Activated CD8-positive, alpha-beta T cell treated with anti-CD3 and anti-CD28 coated beads for 36 hours (primary cell): ENCODE measurements at regions of chr7 and their contacts with region 1.

Region 1: DNA sequence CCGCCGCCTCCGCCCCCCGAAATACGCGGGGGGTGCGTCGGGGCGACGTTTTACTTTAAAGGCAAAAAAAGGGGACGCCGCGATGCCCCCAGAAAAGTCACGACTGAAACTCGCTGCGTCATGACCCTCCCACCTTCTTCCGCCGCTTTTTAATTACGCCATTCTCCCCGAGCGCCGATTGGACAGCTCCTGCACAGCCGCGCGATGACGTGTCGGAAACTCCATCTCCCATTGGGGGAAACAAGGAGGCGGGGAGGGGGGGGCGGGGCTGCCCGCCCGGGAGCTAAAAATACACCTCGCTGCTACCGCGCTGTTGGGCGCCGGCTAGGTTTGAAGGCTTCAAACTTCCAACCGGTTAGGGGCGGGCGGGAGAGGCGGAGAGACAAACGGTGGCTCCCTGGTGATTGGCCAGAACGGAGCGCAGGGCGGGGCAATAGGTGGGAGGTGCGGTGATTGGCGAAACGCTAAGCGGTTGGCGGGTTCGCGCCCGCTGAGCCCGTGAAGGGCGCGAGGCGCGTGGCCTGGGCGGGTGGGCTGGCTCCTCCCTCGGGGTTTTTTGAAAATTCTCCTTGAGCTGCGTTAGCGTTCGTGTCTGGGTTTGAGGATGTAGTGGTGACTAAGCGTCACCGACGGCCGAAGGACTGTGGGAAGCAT is at the start of gene RHEB:
- DNase-seq: peak; percentile 99
- ATAC-seq: peak; percentile 88
- H3K4me3 Mint-ChIP-seq: peak within 1 kb of the TSS; percentile 95
- H3K27ac Mint-ChIP-seq: peak within 1 kb of the TSS; percentile 98
- H3K4me1 Mint-ChIP-seq: peaks cover 33% of the 10 kb centered on the region
- H3K27me3 Mint-ChIP-seq: no peaks in the 10 kb centered on the region
- CTCF ChIP-seq: no peak
- total RNA-seq, gene RHEB: 42.0 to 42.6 TPM

Region 2: GRCh38 chr7:151472644-151473380 is 47.1 kb before region 1 on chr7:
- CTCF ChIA-PET with region 1: interaction called, 3 read pairs
- POLR2A ChIA-PET with region 1: interaction called, 3 read pairs
- intact Hi-C with region 1: loop called (anchors 5 kb)
- DNase-seq: no peak
- ATAC-seq: no peak
- H3K4me3 Mint-ChIP-seq: no peak overlapping the region
- H3K27ac Mint-ChIP-seq: peak overlapping the region; percentile 73
- H3K4me1 Mint-ChIP-seq: peaks cover 45% of the 10 kb centered on the region
- H3K27me3 Mint-ChIP-seq: no peaks in the 10 kb centered on the region
- CTCF ChIP-seq: no peak

Region 3: GRCh38 chr7:151506901-151507382 is 12.9 kb before region 1 on chr7:
- CTCF ChIA-PET with region 1: no interaction called
- POLR2A ChIA-PET with region 1: interaction called, 21 read pairs
- intact Hi-C with region 1: no loop called
- DNase-seq: no peak
- ATAC-seq: no peak
- H3K4me3 Mint-ChIP-seq: no peak overlapping the region
- H3K27ac Mint-ChIP-seq: no peak overlapping the region
- H3K4me1 Mint-ChIP-seq: peaks cover 69% of the 10 kb centered on the region
- H3K27me3 Mint-ChIP-seq: no peaks in the 10 kb centered on the region
- CTCF ChIP-seq: no peak

Region 4: GRCh38 chr7:151631968-151632749 is 112.3 kb after region 1 on chr7:
- CTCF ChIA-PET with region 1: interaction called, 17 read pairs
- POLR2A ChIA-PET with region 1: interaction called, 7 read pairs
- intact Hi-C with region 1: loop called (anchors 5 kb)
- DNase-seq: peak; percentile 84
- ATAC-seq: peak; percentile 80
- H3K4me3 Mint-ChIP-seq: peak overlapping the region; percentile 88
- H3K27ac Mint-ChIP-seq: peak overlapping the region; percentile 95
- H3K4me1 Mint-ChIP-seq: peaks cover 27% of the 10 kb centered on the region
- H3K27me3 Mint-ChIP-seq: no peaks in the 10 kb centered on the region
- CTCF ChIP-seq: peak; percentile 23